ENCODE measurements at regions of chr7 and their contacts with region 1.

Region 1: DNA sequence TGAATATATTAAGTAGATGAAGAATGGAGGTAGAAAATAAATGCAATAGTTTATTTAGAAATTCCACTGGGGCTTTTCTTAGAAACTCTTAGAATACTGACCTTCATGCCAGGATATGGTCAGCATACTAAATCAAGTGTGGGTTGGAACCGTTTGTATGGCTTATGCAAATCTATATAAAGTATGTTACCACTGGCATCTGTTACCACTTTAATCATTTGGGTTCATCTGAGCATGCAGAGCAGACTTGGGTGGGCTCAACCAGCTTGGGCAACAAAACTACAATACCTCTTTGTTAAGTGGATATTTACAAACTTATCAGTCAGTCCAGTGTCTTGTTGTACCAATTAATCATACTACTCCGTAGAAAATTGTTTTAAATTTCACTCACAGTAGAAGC is 125.8 kb downstream of the CRPPA start:
- DNase-seq: no peak
- H3K4me3 Mint-ChIP-seq: no peak overlapping the region
- H3K27ac Mint-ChIP-seq: no peak overlapping the region
- H3K4me1 Mint-ChIP-seq: no peaks in the 10 kb centered on the region
- H3K27me3 Mint-ChIP-seq: no peaks in the 10 kb centered on the region

Region 2: DNA sequence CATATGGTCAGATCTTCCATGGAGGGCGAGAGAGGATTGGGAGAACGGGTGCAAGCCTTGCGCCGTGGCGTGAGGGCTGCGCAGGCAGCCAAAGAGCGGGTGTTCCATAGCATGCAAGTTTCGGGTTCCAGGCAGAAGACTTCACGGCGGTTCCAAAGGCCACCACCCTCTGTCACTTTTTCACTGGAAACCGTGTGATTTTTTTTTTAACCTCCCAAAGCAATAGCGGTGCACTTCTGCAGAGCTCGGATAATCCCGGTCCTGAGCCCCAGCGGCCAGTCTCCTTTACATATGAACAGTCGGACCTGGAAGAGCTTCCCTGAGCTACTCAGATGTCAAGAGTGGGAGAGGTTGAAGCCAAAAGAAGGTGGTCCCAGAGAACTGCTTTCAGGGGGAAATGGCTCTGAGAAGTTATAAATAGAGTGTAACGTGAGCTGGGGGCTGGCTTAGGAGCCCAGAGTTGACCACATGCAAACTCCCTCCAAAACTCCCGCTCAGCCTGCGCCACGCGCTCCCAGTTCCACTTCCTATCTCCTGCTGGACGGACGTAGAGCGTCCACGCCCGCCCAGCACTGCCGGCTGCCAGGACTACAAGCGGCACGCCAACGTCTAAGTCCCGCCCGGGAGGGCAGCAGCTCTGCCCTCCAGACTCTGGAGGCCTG is 609.1 kb before region 1 on chr7 and contains the start of gene MEOX2:
- intact Hi-C with region 1: loop called (anchors 5 kb)
- DNase-seq: no peak
- H3K4me3 Mint-ChIP-seq: no peak within 1 kb of the TSS
- H3K27ac Mint-ChIP-seq: no peak within 1 kb of the TSS
- H3K4me1 Mint-ChIP-seq: no peaks in the 10 kb centered on the region
- H3K27me3 Mint-ChIP-seq: peaks cover 40% of the 10 kb centered on the region
- total RNA-seq, gene MEOX2: not detected in 2 replicates

Region 3: DNA sequence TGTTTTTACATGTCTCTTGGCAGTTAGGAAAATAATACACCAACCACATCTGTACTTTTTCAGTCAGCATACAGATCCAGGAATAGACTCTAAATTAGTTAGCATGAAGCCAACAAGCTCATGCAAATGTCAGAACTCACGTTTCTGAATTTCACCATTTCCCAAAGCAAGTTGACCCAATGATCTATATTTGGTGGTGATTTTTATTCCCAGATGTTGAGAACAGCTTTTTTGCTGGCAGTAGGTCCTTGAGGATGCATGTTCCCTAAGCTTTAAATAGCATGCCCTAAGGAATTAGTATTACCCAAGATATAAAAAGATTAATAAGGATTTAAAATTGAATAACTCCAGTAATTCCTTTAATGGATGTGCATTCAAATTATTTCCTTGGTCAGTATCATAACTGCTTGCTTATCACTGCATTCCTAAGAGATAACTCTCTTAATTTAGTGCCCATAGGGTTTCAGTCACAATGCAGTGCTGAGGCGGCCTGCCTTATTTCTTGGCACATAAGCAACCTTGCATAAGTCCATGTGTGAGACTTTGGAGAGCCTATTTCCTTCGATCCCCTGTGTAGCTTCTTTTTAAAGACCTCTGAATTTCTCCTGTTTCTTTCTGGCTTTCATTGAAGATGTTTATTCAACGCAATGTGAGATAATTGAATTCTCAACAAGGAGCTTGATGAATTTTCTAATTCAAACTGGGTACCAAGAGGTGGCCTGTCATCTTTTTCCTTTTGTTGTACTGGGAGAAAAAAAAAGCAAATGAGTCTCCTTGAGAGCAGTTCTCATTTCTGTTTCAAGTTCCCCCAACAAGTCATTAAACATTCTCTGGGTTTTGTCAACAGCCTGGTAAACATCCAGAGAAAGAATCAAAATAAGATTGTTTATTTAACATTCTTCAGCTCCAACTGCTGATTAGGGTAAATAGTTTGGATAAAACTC is 473.8 kb before region 1 on chr7:
- intact Hi-C with region 1: no loop called
- DNase-seq: no peak
- H3K4me3 Mint-ChIP-seq: no peak overlapping the region
- H3K27ac Mint-ChIP-seq: no peak overlapping the region
- H3K4me1 Mint-ChIP-seq: no peaks in the 10 kb centered on the region
- H3K27me3 Mint-ChIP-seq: no peaks in the 10 kb centered on the region

Measured in activated T-helper 1 cell treated with anti-CD3 and anti-CD28 coated beads, Interleukin-12 subunit alpha, Interleukin-12 subunit beta, Interleukin-2, Interleukin-4 antibody, amounts not matched to agents 30 ng/mL and 10 ng/mL and 1 ng/mL, durations not matched to agents 14 hours and 24 hours and 36 hours (primary cell).